ENCODE measurements at regions of chr1 and their contacts with region 1.

Region 1: GRCh38 chr1:112144733-112145426 is 155.4 kb upstream of the KCND3 start:
- DNase-seq: peak in 4 of 5 donors; percentile 43 to 71 (median 60)
- ATAC-seq: peak; percentile 86 to 95 (median 92)
- H3K4me3 ChIP-seq: no peak overlapping the region
- H3K27ac ChIP-seq: peak overlapping the region in 9 of 12 donors; percentile 18 to 70 (median 52)
- H3K4me1 ChIP-seq: peaks cover 0 to 36% (median 6%) of the 10 kb centered on the region in 12 donors
- H3K27me3 ChIP-seq: no peaks in the 10 kb centered on the region
- CTCF ChIP-seq: no peak
- POLR2A ChIP-seq: no peak

Region 2: GRCh38 chr1:112058815-112059450 is 85.9 kb before region 1 on chr1:
- intact Hi-C with region 1: loop called in 1 of 10 experiments (anchors 10 kb)
- DNase-seq: no peak
- ATAC-seq: no peak
- H3K4me3 ChIP-seq: no peak overlapping the region
- H3K27ac ChIP-seq: no peak overlapping the region
- H3K4me1 ChIP-seq: peaks cover 0 to 47% (median 15%) of the 10 kb centered on the region in 12 donors
- H3K27me3 ChIP-seq: no peaks in the 10 kb centered on the region
- CTCF ChIP-seq: no peak
- POLR2A ChIP-seq: no peak

Region 3: DNA sequence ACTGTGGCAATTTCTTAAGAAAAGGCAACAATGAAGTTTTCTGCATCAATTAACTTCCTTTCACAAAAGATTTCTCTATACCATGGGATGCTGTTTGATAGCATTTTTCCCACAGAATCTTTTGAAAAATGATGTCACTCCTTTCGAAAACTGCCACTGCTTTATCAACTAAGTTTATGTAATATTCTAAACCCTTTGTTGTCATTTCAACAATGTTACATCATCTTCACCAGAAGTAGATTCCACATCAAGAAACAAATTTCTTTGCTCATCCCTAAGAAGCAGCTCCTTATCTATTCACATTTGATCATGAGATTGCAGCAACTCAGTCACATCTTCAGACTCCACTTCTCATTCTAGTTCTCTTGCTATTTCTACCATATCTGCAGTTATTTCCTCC is 39.3 kb before region 1 on chr1:
- intact Hi-C with region 1: no loop called
- DNase-seq: no peak
- ATAC-seq: no peak
- H3K4me3 ChIP-seq: no peak overlapping the region
- H3K27ac ChIP-seq: no peak overlapping the region
- H3K4me1 ChIP-seq: no peaks in the 10 kb centered on the region
- H3K27me3 ChIP-seq: no peaks in the 10 kb centered on the region
- CTCF ChIP-seq: no peak
- POLR2A ChIP-seq: no peak

Region 4: GRCh38 chr1:112165375-112165774 is 20.5 kb after region 1 on chr1:
- intact Hi-C with region 1: loop called in 3 of 10 experiments (anchors 2 kb)
- DNase-seq: no peak
- ATAC-seq: no peak
- H3K4me3 ChIP-seq: no peak overlapping the region
- H3K27ac ChIP-seq: no peak overlapping the region
- H3K4me1 ChIP-seq: no peaks in the 10 kb centered on the region
- H3K27me3 ChIP-seq: peaks cover 0 to 5% (median 0%) of the 10 kb centered on the region in 9 donors
- CTCF ChIP-seq: no peak
- POLR2A ChIP-seq: no peak

Region 5: GRCh38 chr1:112245114-112245513 is 100.2 kb after region 1 on chr1:
- intact Hi-C with region 1: loop called in 1 of 10 experiments (anchors 2 kb)
- DNase-seq: no peak
- ATAC-seq: peak; percentile 76 to 91 (median 86)
- H3K4me3 ChIP-seq: no peak overlapping the region
- H3K27ac ChIP-seq: peak overlapping the region in 1 of 12 donors; percentile 30
- H3K4me1 ChIP-seq: peaks cover 0 to 16% (median 2%) of the 10 kb centered on the region in 12 donors
- H3K27me3 ChIP-seq: no peaks in the 10 kb centered on the region
- CTCF ChIP-seq: no peak
- POLR2A ChIP-seq: no peak

Region 6: DNA sequence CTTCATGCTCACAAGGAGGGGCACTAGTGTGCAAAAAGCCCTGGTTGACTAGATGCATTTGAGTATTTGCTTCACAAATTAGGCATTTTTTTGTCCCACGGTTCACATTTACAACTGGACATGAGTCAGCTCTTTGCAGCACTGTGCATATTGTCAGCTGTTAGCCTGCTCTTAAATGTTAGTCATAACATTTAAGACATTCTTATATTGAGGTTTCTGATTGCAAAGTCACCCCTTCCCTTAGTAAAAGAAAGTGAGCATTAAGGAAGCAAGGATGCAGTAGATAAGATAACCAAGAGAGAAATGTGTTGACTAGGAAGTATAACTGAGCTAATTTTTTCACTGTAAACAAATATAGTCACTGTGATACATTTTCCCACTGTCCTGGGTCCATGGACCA is 118.6 kb after region 1 on chr1:
- intact Hi-C with region 1: loop called in 1 of 10 experiments (anchors 10 kb)
- DNase-seq: no peak
- ATAC-seq: peak in 1 of 4 donors; percentile 44
- H3K4me3 ChIP-seq: no peak overlapping the region
- H3K27ac ChIP-seq: peak overlapping the region in 8 of 12 donors; percentile 10 to 80 (median 52)
- H3K4me1 ChIP-seq: peaks cover 0 to 50% (median 28%) of the 10 kb centered on the region in 12 donors
- H3K27me3 ChIP-seq: no peaks in the 10 kb centered on the region
- CTCF ChIP-seq: no peak
- POLR2A ChIP-seq: no peak